ENCODE measurements at regions of chr2 and their contacts with region 1.

Region 1: GRCh38 chr2:219701847-219702634 is 74.6 kb downstream of the SLC4A3 start:
- DNase-seq: peak; percentile 63
- H3K4me3 Mint-ChIP-seq: no peak overlapping the region
- H3K27ac Mint-ChIP-seq: no peak overlapping the region
- H3K4me1 Mint-ChIP-seq: peaks cover 20% of the 10 kb centered on the region
- H3K27me3 Mint-ChIP-seq: no peaks in the 10 kb centered on the region
- CTCF ChIP-seq: no peak

Region 2: DNA sequence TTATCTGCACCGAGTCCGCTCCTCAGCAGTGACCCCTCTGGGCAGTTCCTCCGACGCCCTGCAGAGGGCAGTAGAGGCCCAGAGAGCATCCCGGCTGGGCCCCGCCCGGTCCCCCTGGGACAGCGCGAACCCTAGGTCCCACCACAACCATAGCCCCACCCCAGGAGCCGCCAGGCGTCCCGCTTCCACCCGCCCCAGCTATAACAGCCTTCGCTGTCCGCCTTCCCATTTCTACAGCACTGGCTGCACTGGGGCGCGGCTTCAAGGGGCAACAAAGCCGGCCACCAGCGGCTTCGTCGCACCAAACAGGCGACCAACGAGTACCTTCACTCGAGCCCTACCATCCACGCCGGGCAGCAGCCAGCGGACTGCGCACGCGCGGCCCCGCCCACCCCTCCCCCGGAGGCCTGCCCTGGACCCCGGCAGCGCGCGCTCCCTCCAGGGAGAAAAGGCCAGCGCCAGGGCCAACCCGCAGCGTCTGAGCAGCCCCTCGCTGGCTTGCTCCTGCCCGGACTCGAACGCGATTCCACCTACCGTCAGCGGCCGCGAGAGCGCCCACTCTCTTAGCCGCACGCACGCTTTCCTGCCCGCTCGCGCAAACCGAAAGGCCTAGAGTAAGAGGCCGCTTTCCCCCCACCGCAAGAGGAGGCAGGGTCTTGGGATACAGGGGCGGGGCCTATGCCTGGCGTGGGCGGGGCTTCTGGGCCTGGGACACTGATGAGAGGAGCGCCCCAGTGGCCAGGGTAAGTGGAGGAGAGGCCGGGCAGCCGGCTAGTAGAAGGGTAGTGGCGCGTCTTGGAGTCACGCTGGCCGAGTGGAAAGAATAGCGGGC is 541.6 kb before region 1 on chr2 and contains the start of gene NHEJ1:
- CTCF ChIA-PET with region 1: no interaction called
- POLR2A ChIA-PET with region 1: no interaction called
- intact Hi-C with region 1: no loop called
- DNase-seq: peak; percentile 95
- H3K4me3 Mint-ChIP-seq: peak within 1 kb of the TSS; percentile 77
- H3K27ac Mint-ChIP-seq: peak within 1 kb of the TSS; percentile 37
- H3K4me1 Mint-ChIP-seq: peaks cover 14% of the 10 kb centered on the region
- H3K27me3 Mint-ChIP-seq: no peaks in the 10 kb centered on the region
- CTCF ChIP-seq: peak; percentile 96
- total RNA-seq, gene NHEJ1: 7.5 and 11.5 TPM in 2 replicates

Region 3: DNA sequence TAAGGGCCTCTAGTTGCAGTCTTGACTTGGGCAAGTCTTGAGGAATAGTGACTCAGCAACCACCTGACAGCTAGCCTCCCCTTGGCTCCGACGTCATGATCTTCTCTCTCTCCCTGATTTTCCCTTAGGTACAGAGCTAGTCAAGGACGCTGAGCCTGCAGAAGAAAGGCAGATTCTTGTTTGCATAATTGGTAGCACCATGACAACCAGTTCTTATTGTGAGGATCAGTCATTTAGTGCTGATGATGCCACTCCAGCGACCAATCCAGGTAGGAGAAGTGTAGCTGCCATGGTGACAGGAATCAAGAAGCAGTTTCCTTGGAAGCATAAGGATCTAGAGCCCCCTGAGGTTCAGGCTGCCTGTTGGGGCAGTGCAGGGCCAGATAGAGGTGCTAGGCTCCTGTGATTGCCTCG is 366.7 kb before region 1 on chr2:
- CTCF ChIA-PET with region 1: no interaction called
- POLR2A ChIA-PET with region 1: no interaction called
- intact Hi-C with region 1: no loop called
- DNase-seq: peak; percentile 19
- H3K4me3 Mint-ChIP-seq: no peak overlapping the region
- H3K27ac Mint-ChIP-seq: no peak overlapping the region
- H3K4me1 Mint-ChIP-seq: peaks cover 6% of the 10 kb centered on the region
- H3K27me3 Mint-ChIP-seq: peaks cover 87% of the 10 kb centered on the region
- CTCF ChIP-seq: no peak

Region 4: GRCh38 chr2:219722349-219722776 is 20.3 kb after region 1 on chr2:
- CTCF ChIA-PET with region 1: interaction called, 8 read pairs
- POLR2A ChIA-PET with region 1: interaction called, 11 read pairs
- intact Hi-C with region 1: no loop called
- DNase-seq: peak; percentile 88
- H3K4me3 Mint-ChIP-seq: no peak overlapping the region
- H3K27ac Mint-ChIP-seq: peak overlapping the region; percentile 5
- H3K4me1 Mint-ChIP-seq: peaks cover 23% of the 10 kb centered on the region
- H3K27me3 Mint-ChIP-seq: no peaks in the 10 kb centered on the region
- CTCF ChIP-seq: no peak

Region 5: GRCh38 chr2:219731173-219731572 is 29.1 kb after region 1 on chr2:
- CTCF ChIA-PET with region 1: interaction called, 8 read pairs
- POLR2A ChIA-PET with region 1: interaction called, 11 read pairs
- intact Hi-C with region 1: no loop called
- DNase-seq: peak; percentile 57
- H3K4me3 Mint-ChIP-seq: no peak overlapping the region
- H3K27ac Mint-ChIP-seq: no peak overlapping the region
- H3K4me1 Mint-ChIP-seq: peaks cover 15% of the 10 kb centered on the region
- H3K27me3 Mint-ChIP-seq: no peaks in the 10 kb centered on the region
- CTCF ChIP-seq: no peak

Region 6: GRCh38 chr2:220188031-220188430 is 486.0 kb after region 1 on chr2:
- CTCF ChIA-PET with region 1: no interaction called
- POLR2A ChIA-PET with region 1: no interaction called
- intact Hi-C with region 1: no loop called
- DNase-seq: peak; percentile 73
- H3K4me3 Mint-ChIP-seq: no peak overlapping the region
- H3K27ac Mint-ChIP-seq: no peak overlapping the region
- H3K4me1 Mint-ChIP-seq: peaks cover 7% of the 10 kb centered on the region
- H3K27me3 Mint-ChIP-seq: no peaks in the 10 kb centered on the region
- CTCF ChIP-seq: no peak